ENCODE measurements at regions of chr10 and their contacts with region 1.

Region 1: DNA sequence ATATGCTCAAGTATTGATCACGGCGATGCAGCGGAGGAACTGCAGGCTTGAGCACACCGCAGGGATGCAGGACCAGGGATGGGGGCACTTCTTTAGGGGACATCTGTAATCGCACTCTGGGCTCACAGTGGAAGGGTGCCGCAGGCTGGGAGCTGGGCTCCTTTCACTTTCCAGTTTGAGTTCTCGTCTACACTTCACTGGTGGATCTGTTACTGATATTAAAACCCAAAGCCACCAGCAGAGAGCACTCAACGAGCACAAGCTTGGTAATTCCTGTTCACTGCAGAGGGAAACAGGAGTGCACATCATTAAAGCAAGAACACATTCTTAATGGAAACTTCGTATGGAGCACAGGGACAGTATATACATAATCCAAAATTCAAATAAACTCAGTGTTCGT is 91.3 kb downstream of the PARD3 start:
- DNase-seq: peak; percentile 76
- H3K4me3 ChIP-seq: no peak overlapping the region
- H3K27ac ChIP-seq: no peak overlapping the region
- H3K4me1 ChIP-seq: peaks cover 8% of the 10 kb centered on the region
- H3K27me3 ChIP-seq: no peaks in the 10 kb centered on the region
- CTCF ChIP-seq: peak; percentile 26 to 47
- POLR2A ChIP-seq: no peak

Region 2: DNA sequence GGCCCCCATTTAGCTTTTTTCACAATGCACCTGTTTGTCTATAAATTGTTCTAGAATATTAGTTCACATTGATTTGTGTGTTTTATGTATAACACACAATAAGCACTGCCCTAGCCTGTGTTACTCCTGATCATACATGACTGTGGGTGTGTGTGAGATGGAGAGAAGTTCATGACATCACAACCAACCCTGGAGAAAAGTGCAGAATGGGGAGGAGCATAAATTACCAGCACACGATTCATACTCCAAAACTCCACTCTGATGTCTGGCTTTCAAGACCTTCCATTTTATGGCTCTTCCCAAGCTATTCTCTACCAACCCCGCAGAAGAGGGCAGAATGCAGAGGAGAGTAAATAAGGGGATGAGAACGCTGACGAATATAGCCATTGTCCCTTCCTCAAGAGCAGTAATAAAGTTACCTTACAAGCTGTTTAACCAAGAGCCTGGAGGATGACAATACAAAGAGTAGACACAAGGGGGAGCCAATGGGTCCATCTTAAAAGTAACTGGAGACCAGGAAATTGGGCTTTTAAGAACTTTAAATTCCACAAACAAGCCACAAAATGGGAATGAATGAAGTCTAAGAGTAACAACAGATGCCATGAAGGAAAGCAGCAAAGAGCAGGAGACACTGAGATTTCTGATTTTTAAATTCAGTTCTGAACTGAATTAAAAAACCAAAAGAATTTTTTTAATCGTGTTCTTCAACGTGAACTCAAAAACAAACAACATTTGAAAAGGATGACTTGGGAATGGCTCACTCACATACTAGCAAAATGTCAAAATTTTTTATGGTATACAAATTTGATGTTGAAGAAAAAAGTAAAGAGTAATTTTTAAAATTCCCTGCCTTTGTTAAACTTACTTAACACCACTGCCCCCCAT is 68.2 kb before region 1 on chr10:
- CTCF ChIA-PET with region 1: interaction called, 10 read pairs
- POLR2A ChIA-PET with region 1: no interaction called
- dilution Hi-C with region 1: no loop called
- intact Hi-C with region 1: no loop called
- DNase-seq: peak; percentile 86
- H3K4me3 ChIP-seq: no peak overlapping the region
- H3K27ac ChIP-seq: no peak overlapping the region
- H3K4me1 ChIP-seq: no peaks in the 10 kb centered on the region
- H3K27me3 ChIP-seq: no peaks in the 10 kb centered on the region
- CTCF ChIP-seq: peak; percentile 53 to 64
- POLR2A ChIP-seq: no peak

Region 3: GRCh38 chr10:34710391-34710751 is 13.4 kb before region 1 on chr10:
- CTCF ChIA-PET with region 1: interaction called, 23 read pairs
- POLR2A ChIA-PET with region 1: no interaction called
- dilution Hi-C with region 1: no loop called
- intact Hi-C with region 1: no loop called
- DNase-seq: peak; percentile 59
- H3K4me3 ChIP-seq: no peak overlapping the region
- H3K27ac ChIP-seq: no peak overlapping the region
- H3K4me1 ChIP-seq: peaks cover 36% of the 10 kb centered on the region
- H3K27me3 ChIP-seq: no peaks in the 10 kb centered on the region
- CTCF ChIP-seq: no peak
- POLR2A ChIP-seq: no peak

Region 4: GRCh38 chr10:34768972-34769330 is 45.2 kb after region 1 on chr10:
- CTCF ChIA-PET with region 1: no interaction called
- POLR2A ChIA-PET with region 1: no interaction called
- dilution Hi-C with region 1: no loop called
- intact Hi-C with region 1: no loop called
- DNase-seq: no peak
- H3K4me3 ChIP-seq: no peak overlapping the region
- H3K27ac ChIP-seq: no peak overlapping the region
- H3K4me1 ChIP-seq: peaks cover 7% of the 10 kb centered on the region
- H3K27me3 ChIP-seq: no peaks in the 10 kb centered on the region
- CTCF ChIP-seq: no peak
- POLR2A ChIP-seq: no peak

Region 5: DNA sequence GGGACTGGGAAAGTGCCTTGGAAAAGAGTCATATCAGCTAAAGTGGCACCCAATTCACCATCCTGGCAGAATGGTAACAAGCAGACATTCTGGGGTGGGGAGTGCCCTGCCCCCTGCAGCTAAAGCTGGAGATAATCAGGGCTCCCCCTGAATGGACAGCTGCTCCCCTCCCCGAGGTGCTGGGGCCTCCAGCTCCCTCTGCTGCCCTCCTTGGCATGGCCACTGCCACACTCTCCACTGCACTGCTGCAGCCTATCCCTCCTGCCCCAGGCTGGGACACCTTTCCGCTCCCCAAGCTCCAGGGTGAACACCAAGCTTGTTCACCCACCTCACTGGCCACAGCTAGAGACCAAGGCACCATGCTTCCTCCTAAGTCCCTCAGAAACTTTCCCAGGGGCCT is 101.1 kb after region 1 on chr10:
- CTCF ChIA-PET with region 1: interaction called, 19 read pairs
- POLR2A ChIA-PET with region 1: no interaction called
- dilution Hi-C with region 1: no loop called
- intact Hi-C with region 1: no loop called
- DNase-seq: no peak
- H3K4me3 ChIP-seq: no peak overlapping the region
- H3K27ac ChIP-seq: no peak overlapping the region
- H3K4me1 ChIP-seq: no peaks in the 10 kb centered on the region
- H3K27me3 ChIP-seq: peaks cover 0 to 8% of the 10 kb centered on the region in 2 experiments
- CTCF ChIP-seq: peak in 1 of 2 donors; percentile 19
- POLR2A ChIP-seq: no peak

Region 6: DNA sequence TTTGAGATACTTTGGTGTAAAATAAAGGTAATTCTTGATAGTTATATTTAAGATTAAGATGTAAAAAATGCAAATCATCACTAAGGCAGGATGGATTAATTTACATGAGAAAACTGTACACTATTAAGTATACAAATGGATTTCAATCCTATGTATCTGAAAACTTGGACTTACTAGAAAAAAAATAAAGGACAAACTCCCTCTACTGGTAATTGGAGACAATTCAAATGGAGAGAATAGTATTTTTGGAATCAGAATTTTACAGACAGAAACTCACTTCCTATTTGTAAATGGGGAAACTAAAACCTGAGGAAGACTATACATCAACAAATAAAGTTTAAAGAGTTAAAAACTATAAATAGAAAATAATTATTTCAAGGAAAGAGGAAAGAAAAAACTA is 303.8 kb after region 1 on chr10:
- CTCF ChIA-PET with region 1: interaction called, 15 read pairs
- POLR2A ChIA-PET with region 1: no interaction called
- dilution Hi-C with region 1: no loop called
- intact Hi-C with region 1: no loop called
- DNase-seq: peak; percentile 63
- H3K4me3 ChIP-seq: no peak overlapping the region
- H3K27ac ChIP-seq: no peak overlapping the region
- H3K4me1 ChIP-seq: no peaks in the 10 kb centered on the region
- H3K27me3 ChIP-seq: no peaks in the 10 kb centered on the region
- CTCF ChIP-seq: peak in 1 of 2 donors; percentile 6
- POLR2A ChIP-seq: no peak

Region 7: DNA sequence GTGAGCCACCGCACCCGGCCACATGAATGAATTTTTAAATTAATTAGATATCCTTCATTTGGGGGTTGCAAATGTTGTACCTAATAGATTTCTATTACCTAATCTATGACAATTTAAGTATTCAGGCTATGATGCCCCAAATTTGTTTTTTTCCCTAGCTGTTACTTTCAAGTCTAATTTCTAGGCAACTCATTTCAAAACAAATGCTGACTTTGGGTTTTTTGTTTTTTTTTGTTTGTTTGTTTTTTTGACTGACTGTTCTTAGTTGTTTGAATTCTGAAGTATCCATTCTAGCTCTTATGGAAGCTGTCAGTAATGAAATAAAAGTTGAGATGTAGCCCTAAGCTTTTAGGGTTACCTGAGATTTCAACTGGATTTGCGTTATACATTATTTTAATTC is 465.2 kb after region 1 on chr10:
- CTCF ChIA-PET with region 1: no interaction called
- POLR2A ChIA-PET with region 1: no interaction called
- dilution Hi-C with region 1: no loop called
- intact Hi-C with region 1: no loop called
- DNase-seq: no peak
- H3K4me3 ChIP-seq: no peak overlapping the region
- H3K27ac ChIP-seq: no peak overlapping the region
- H3K4me1 ChIP-seq: peaks cover 9% of the 10 kb centered on the region
- H3K27me3 ChIP-seq: no peaks in the 10 kb centered on the region
- CTCF ChIP-seq: no peak
- POLR2A ChIP-seq: no peak

Measured in endothelial cell of umbilical vein (primary cell).